PC-9 (cell line): ENCODE measurements at regions of chr2 and their contacts with region 1.

Region 1: DNA sequence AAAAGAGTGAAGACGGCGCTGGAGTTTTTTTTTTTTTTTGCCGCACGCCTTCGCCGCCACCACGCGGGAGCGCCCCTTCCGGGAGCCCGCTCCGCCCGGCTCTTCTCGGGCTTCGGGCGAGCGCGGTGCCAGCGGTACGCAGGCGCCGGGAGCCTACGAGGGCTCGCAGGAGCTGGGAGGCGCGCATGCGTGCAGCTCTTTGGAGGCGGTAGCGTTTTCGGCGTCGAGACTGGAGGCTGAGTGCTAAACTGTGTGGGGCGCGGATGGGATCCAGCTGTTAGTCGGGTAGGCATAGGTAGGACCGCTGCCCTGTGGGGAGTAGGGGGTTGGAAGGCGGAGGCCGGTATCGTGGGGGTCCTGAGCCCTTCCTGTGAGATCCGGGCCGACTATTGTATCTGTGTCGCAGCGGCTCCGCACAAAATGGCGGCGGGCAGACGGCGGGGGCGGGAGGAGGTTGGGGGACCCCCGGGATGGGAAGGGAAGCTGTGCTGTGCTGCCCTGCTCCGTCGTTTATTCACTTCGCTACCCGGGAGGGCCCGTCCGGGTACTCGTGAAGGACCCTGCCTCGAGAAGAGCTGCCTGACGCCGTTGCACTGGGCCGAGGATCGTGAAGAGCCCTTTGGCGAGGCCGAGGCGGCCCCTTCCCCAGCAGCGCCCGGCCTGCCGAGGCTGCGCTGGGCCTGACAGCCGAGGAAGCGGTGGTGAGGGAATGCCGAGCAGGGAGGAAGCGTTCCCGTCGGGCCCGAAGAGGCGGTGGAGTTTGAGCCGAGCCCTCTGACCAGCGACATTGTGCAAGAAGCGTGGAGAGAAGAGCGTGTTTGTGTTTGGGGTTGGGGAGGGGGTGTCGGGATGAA is at the start of gene ZNF638:
- DNase-seq: peak; percentile 85 to 90
- H3K4me3 ChIP-seq: peak within 1 kb of the TSS; percentile 66
- H3K27ac ChIP-seq: peak within 1 kb of the TSS; percentile 56
- H3K4me1 ChIP-seq: peaks cover 37% of the 10 kb centered on the region
- H3K27me3 ChIP-seq: no peaks in the 10 kb centered on the region
- CTCF ChIP-seq: peak; percentile 75
- total RNA-seq, gene ZNF638: 109 and 122 TPM in 2 replicates

Region 2: GRCh38 chr2:71000780-71001591 is 330.8 kb before region 1 on chr2:
- CTCF ChIA-PET with region 1: no interaction called
- POLR2A ChIA-PET with region 1: no interaction called
- intact Hi-C with region 1: no loop called
- DNase-seq: peak in 1 of 2 experiments; percentile 60
- H3K4me3 ChIP-seq: peak overlapping the region; percentile 52
- H3K27ac ChIP-seq: no peak overlapping the region
- H3K4me1 ChIP-seq: peaks cover 6% of the 10 kb centered on the region
- H3K27me3 ChIP-seq: no peaks in the 10 kb centered on the region
- CTCF ChIP-seq: peak; percentile 93

Region 3: GRCh38 chr2:71226965-71227560 is 104.7 kb before region 1 on chr2 and contains the start of gene PAIP2B:
- CTCF ChIA-PET with region 1: interaction called, 9 read pairs
- POLR2A ChIA-PET with region 1: interaction called, 3 read pairs
- intact Hi-C with region 1: loop called (anchors 10 kb)
- DNase-seq: peak; percentile 98 to 100
- H3K4me3 ChIP-seq: peak within 1 kb of the TSS; percentile 69
- H3K27ac ChIP-seq: no peak within 1 kb of the TSS
- H3K4me1 ChIP-seq: peaks cover 10% of the 10 kb centered on the region
- H3K27me3 ChIP-seq: no peaks in the 10 kb centered on the region
- CTCF ChIP-seq: 0 out of 2 replicates have a peak, but pooled peaks have one; percentile 2
- total RNA-seq, gene PAIP2B: 5.4 and 6.1 TPM in 2 replicates

Region 4: DNA sequence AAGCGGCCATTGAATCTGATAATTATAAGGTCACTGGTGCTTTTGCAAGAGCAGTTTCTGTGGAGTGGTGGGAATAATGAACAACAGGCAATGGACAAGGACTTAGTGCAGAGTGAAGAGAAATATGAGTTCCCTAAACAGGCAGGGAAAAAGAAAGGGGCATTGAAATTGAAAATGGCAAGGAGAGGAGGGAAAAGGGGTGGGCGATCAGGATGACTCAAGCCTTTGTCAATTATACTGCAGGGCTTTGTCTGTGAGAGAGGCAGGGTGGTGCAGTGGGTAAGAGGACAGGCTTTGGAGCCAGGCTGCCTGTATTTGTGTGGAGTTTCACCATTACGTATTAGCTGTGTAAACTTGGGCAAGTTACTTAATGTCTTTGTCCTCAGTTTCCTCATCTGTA is 75.4 kb before region 1 on chr2:
- CTCF ChIA-PET with region 1: interaction called, 12 read pairs
- POLR2A ChIA-PET with region 1: no interaction called
- intact Hi-C with region 1: no loop called
- DNase-seq: no peak
- H3K4me3 ChIP-seq: no peak overlapping the region
- H3K27ac ChIP-seq: no peak overlapping the region
- H3K4me1 ChIP-seq: no peaks in the 10 kb centered on the region
- H3K27me3 ChIP-seq: peaks cover 24% of the 10 kb centered on the region; the same call in 1 of the 2 replicates
- CTCF ChIP-seq: no peak

Region 5: GRCh38 chr2:71276311-71277146 is 55.3 kb before region 1 on chr2:
- CTCF ChIA-PET with region 1: interaction called, 10 read pairs
- POLR2A ChIA-PET with region 1: no interaction called
- intact Hi-C with region 1: no loop called
- DNase-seq: peak; percentile 84 to 95
- H3K4me3 ChIP-seq: peak overlapping the region; percentile 62
- H3K27ac ChIP-seq: no peak overlapping the region
- H3K4me1 ChIP-seq: peaks cover 19% of the 10 kb centered on the region
- H3K27me3 ChIP-seq: no peaks in the 10 kb centered on the region
- CTCF ChIP-seq: no peak

Region 6: DNA sequence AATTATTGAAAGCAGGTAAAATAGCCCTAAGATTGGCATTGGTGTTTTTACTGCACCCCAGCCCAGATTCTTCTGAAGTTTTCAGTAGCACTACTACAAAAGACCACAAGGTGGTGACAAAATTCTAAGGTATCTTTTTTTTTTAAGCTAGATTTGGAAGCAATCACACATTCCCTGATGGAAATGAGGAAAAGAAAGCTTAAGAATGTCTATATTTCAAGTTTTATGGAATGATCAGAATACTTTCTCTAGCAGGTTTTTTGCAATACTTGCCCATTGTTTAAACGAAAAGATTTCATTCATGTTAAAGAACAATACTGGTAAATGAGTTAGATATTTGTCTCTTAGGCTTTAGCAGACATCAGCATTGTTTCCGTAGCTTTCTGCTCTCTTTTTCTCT is 32.3 kb before region 1 on chr2:
- CTCF ChIA-PET with region 1: interaction called, 21 read pairs
- POLR2A ChIA-PET with region 1: interaction called, 13 read pairs
- intact Hi-C with region 1: no loop called
- DNase-seq: no peak
- H3K4me3 ChIP-seq: no peak overlapping the region
- H3K27ac ChIP-seq: no peak overlapping the region
- H3K4me1 ChIP-seq: no peaks in the 10 kb centered on the region
- H3K27me3 ChIP-seq: no peaks in the 10 kb centered on the region
- CTCF ChIP-seq: peak; percentile 90

Region 7: GRCh38 chr2:73243884-73244570 is 1912.2 kb after region 1 on chr2:
- CTCF ChIA-PET with region 1: interaction called, 14 read pairs
- POLR2A ChIA-PET with region 1: no interaction called
- intact Hi-C with region 1: no loop called
- DNase-seq: peak; percentile 86 to 96
- H3K4me3 ChIP-seq: no peak overlapping the region
- H3K27ac ChIP-seq: peak overlapping the region; percentile 31
- H3K4me1 ChIP-seq: peaks cover 16% of the 10 kb centered on the region
- H3K27me3 ChIP-seq: no peaks in the 10 kb centered on the region
- CTCF ChIP-seq: no peak